Activated CD4-positive, alpha-beta T cell treated with anti-CD3 and anti-CD28 coated beads for 36 hours (primary cell): ENCODE measurements at regions of chr2 and their contacts with region 1.

Region 1: DNA sequence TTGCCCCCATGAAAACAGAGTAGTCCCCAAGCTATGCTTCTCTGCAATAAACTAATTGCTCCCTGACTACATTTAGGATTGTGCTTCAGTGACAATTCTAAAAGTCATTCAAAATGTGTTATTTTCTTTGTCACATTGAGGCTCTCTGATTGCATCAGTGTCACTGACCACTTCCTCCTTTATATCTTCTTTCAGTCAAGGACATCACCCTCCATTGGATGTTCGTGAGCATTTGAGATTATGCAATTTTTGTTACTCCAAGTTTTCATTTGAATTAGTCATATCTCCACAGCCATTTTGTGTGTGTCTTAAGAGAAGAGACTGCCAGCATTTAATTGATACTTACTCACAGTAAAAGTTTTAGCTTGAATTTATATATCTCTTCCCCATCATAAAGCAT is 780.8 kb upstream of the GCFC2 start:
- DNase-seq: no peak
- ATAC-seq: no peak
- H3K4me3 Mint-ChIP-seq: no peak overlapping the region
- H3K27ac Mint-ChIP-seq: no peak overlapping the region
- H3K4me1 Mint-ChIP-seq: no peaks in the 10 kb centered on the region
- H3K27me3 Mint-ChIP-seq: no peaks in the 10 kb centered on the region

Region 2: DNA sequence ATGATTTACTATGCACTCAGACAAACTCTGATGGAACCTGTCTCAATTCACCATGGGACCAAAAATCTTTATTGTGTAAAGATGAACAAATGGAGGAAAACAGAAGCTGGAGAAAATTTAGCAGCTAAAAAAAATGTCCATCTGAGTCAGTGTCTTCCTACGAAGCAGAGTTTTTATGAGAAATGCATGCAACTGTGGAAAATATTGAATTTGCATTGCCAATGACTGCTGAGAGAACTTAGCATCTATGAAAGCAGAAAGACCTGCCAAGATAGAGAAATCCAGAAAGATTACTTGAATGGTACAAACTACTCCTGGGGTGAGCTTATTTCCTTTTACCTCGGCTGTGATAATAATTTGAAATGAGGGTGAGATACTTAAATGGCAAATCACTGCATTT is 491.1 kb before region 1 on chr2:
- CTCF ChIA-PET with region 1: no interaction called
- POLR2A ChIA-PET with region 1: interaction called, 11 read pairs
- intact Hi-C with region 1: no loop called
- DNase-seq: no peak
- ATAC-seq: no peak
- H3K4me3 Mint-ChIP-seq: no peak overlapping the region
- H3K27ac Mint-ChIP-seq: no peak overlapping the region
- H3K4me1 Mint-ChIP-seq: no peaks in the 10 kb centered on the region
- H3K27me3 Mint-ChIP-seq: no peaks in the 10 kb centered on the region